GM12878 (cell line): ENCODE measurements at regions of chr1 and their contacts with region 1.

Region 1: DNA sequence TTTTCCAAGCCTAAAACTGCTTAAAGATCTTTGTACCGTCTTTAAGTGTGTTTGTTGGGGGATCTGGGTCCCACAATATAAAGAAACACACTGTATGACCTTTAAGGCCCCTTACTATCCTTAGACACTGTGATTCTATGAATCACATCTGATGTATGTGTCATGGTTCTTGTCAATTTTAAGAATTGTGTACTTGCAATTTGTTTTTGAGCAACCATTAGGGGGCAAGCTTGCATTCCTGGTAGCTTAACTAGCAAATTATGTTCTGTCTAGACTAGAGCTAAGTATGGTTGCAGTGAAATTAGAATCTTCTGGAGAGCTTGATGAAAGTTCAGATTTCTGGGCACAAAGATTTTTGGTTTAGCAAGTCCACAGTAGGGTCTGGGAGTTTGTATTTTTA is 219.5 kb downstream of the TPR start:
- DNase-seq: no peak
- ATAC-seq: peak; percentile 79
- H3K4me3 ChIP-seq: no peak overlapping the region
- H3K27ac ChIP-seq: no peak overlapping the region
- H3K4me1 ChIP-seq: no peaks in the 10 kb centered on the region
- H3K27me3 ChIP-seq: peaks cover 0 to 4% of the 10 kb centered on the region in 2 experiments; a peak in 2 of 4 replicates
- CTCF ChIP-seq: peak; percentile 45 to 65 (median 51); a peak in 4 of 6 replicates
- EP300 ChIP-seq: no peak
- POLR2A ChIP-seq: no peak
- RAD21 ChIP-seq: peak; percentile 53

Region 2: DNA sequence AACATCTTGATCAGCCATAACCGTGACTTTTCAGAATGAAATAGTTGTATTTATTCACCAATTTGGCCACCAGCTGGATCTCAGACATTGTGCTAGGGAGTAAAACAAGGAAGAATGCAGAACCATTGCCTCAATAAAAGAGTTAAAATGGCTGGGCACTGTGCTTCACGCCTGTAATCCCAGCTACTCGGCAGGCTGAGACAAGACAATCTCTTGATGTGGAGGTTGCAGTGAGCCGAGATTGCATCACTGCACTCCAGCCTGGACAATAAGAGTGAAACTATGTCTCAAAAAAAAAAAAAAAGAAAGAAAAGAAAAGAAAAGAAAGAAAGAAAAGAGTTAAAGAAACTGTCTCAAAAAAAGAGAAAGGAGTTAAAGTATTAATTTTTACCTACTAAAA is 20.0 kb after region 1 on chr1:
- CTCF ChIA-PET with region 1: interaction called, 15 read pairs
- POLR2A ChIA-PET with region 1: no interaction called
- RAD21 ChIA-PET with region 1: no interaction called
- SMC1A ChIA-PET with region 1: no interaction called
- in situ Hi-C with region 1: no loop called
- intact Hi-C with region 1: no loop called
- DNase-seq: no peak
- ATAC-seq: no peak
- H3K4me3 ChIP-seq: no peak overlapping the region
- H3K27ac ChIP-seq: no peak overlapping the region
- H3K4me1 ChIP-seq: no peaks in the 10 kb centered on the region
- H3K27me3 ChIP-seq: no peaks in the 10 kb centered on the region
- CTCF ChIP-seq: no peak
- EP300 ChIP-seq: no peak
- POLR2A ChIP-seq: no peak
- RAD21 ChIP-seq: no peak

Region 3: GRCh38 chr1:186272486-186272885 is 116.9 kb after region 1 on chr1:
- CTCF ChIA-PET with region 1: no interaction called
- POLR2A ChIA-PET with region 1: no interaction called
- RAD21 ChIA-PET with region 1: no interaction called
- SMC1A ChIA-PET with region 1: no interaction called
- in situ Hi-C with region 1: no loop called
- intact Hi-C with region 1: no loop called
- DNase-seq: no peak
- ATAC-seq: no peak; the same call in 1 of the 3 replicates
- H3K4me3 ChIP-seq: no peak overlapping the region
- H3K27ac ChIP-seq: no peak overlapping the region
- H3K4me1 ChIP-seq: no peaks in the 10 kb centered on the region
- H3K27me3 ChIP-seq: no peaks in the 10 kb centered on the region
- CTCF ChIP-seq: peak in 1 of 3 experiments; percentile 24; a peak in 2 of 6 replicates
- EP300 ChIP-seq: no peak
- POLR2A ChIP-seq: no peak
- RAD21 ChIP-seq: peak; percentile 24; the same call in 1 of the 2 replicates

Region 4: DNA sequence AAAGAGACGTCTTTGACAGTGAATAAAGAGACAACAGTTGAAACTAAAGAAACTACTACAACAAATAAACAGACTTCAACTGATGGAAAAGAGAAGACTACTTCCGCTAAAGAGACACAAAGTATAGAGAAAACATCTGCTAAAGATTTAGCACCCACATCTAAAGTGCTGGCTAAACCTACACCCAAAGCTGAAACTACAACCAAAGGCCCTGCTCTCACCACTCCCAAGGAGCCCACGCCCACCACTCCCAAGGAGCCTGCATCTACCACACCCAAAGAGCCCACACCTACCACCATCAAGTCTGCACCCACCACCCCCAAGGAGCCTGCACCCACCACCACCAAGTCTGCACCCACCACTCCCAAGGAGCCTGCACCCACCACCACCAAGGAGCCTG is 150.9 kb after region 1 on chr1:
- CTCF ChIA-PET with region 1: no interaction called
- POLR2A ChIA-PET with region 1: no interaction called
- RAD21 ChIA-PET with region 1: no interaction called
- SMC1A ChIA-PET with region 1: no interaction called
- in situ Hi-C with region 1: no loop called
- intact Hi-C with region 1: no loop called
- DNase-seq: no peak
- ATAC-seq: no peak
- H3K4me3 ChIP-seq: no peak overlapping the region
- H3K27ac ChIP-seq: no peak overlapping the region
- H3K4me1 ChIP-seq: no peaks in the 10 kb centered on the region
- H3K27me3 ChIP-seq: no peaks in the 10 kb centered on the region
- CTCF ChIP-seq: no peak
- EP300 ChIP-seq: no peak
- POLR2A ChIP-seq: no peak
- RAD21 ChIP-seq: no peak